Activated B cell treated with CpG ODN at 0.5 μM for 24 hours (primary cell): ENCODE measurements at regions of chr11 and their contacts with region 1.

Region 1: GRCh38 chr11:14331476-14332136 is 27.4 kb downstream of the RRAS2 start:
- DNase-seq: no peak
- ATAC-seq: peak; percentile 82
- H3K4me3 Mint-ChIP-seq: peak overlapping the region; percentile 63
- H3K27ac Mint-ChIP-seq: peak overlapping the region; percentile 87
- H3K4me1 Mint-ChIP-seq: peaks cover 81% of the 10 kb centered on the region
- H3K27me3 Mint-ChIP-seq: no peaks in the 10 kb centered on the region
- CTCF ChIP-seq: no peak

Region 2: DNA sequence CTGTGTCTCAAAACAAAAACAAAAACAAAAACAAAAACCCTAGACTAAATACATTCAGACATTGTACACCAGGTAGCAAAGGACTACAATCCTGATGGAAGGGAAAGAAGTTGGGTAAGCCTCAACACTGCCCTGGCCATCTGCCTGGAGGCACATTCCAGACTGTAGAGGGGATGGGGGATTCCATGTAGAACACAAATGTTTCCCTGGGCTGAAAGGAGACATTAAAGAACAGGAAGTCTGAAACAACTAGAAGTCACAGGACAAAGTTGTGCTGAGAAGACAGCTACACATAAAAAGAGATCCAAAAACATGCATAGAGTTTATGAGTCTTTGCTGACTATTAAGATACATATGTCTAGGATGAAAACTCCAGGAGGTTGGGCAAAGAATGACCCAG is 56.5 kb before region 1 on chr11:
- CTCF ChIA-PET with region 1: no interaction called
- POLR2A ChIA-PET with region 1: interaction called, 10 read pairs
- intact Hi-C with region 1: no loop called
- DNase-seq: no peak
- ATAC-seq: no peak
- H3K4me3 Mint-ChIP-seq: no peak overlapping the region
- H3K27ac Mint-ChIP-seq: peak overlapping the region; percentile 41
- H3K4me1 Mint-ChIP-seq: peaks cover 43% of the 10 kb centered on the region
- H3K27me3 Mint-ChIP-seq: no peaks in the 10 kb centered on the region
- CTCF ChIP-seq: no peak

Region 3: DNA sequence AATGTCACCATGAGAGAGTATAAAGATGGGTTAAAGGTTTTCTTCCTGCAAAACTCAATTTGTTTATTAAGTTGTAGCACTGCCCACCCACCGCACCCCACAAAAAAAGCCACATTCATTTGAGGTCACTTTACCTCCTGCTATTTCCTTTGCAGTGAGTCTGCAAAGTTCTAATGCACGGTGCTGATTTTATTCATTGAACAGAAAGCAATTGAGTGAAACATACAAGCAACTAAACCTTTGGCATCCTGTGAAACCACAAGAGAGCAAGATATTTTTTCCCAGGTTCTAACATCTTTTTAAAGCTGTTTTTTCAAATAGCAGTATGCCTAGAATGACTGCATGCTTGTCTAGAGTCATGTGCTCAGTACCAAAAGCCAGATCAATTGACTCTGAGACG is 11.6 kb before region 1 on chr11:
- CTCF ChIA-PET with region 1: interaction called, 3 read pairs
- POLR2A ChIA-PET with region 1: interaction called, 21 read pairs
- intact Hi-C with region 1: loop called (anchors 2 kb)
- DNase-seq: no peak
- ATAC-seq: no peak
- H3K4me3 Mint-ChIP-seq: peak overlapping the region; percentile 65
- H3K27ac Mint-ChIP-seq: peak overlapping the region; percentile 83
- H3K4me1 Mint-ChIP-seq: peaks cover 93% of the 10 kb centered on the region
- H3K27me3 Mint-ChIP-seq: no peaks in the 10 kb centered on the region
- CTCF ChIP-seq: no peak

Region 4: DNA sequence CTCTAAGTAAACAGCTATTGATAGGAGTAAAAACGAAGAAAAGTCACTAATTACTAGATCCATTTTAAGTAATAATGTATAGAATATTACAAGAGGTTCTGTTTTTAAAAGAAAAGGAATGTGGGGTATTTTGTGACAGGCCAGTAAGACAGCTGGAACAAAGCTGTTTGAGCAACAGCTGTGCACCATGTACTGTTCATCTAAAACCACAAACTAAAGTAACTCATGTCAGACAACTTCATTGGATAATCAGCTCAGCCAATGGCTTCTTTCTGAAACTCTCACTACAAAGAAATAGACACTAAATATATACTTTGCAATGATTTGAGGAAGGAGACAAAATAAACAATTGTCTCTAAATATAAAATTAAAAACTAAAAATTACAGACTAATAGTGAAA is 11.3 kb after region 1 on chr11:
- CTCF ChIA-PET with region 1: interaction called, 5 read pairs
- POLR2A ChIA-PET with region 1: interaction called, 7 read pairs
- intact Hi-C with region 1: loop called (anchors 1 kb)
- DNase-seq: no peak
- ATAC-seq: peak; percentile 32
- H3K4me3 Mint-ChIP-seq: no peak overlapping the region
- H3K27ac Mint-ChIP-seq: no peak overlapping the region
- H3K4me1 Mint-ChIP-seq: peaks cover 75% of the 10 kb centered on the region
- H3K27me3 Mint-ChIP-seq: no peaks in the 10 kb centered on the region
- CTCF ChIP-seq: no peak

Region 5: DNA sequence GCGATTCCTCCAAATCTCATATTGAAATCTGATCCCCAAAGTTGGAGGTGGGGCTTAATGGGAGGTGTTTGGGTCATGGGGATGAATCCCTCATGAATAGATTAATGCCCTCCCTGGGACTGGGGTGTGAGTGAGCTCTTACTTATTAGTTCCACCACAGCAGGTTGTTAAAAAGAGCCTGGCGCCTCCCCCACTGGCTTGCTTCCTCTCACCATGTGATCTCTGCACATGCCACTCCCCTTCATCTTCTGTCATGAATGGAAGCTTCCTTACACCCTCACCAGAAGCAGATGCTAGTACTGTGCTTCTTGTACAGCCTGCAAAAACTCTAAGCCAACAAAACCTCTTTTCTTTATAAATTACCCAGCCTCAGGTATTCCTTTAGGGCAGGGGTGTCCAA is 18.6 kb after region 1 on chr11:
- CTCF ChIA-PET with region 1: interaction called, 5 read pairs
- POLR2A ChIA-PET with region 1: interaction called, 3 read pairs
- intact Hi-C with region 1: loop called (anchors 2 kb)
- DNase-seq: no peak
- ATAC-seq: peak; percentile 71
- H3K4me3 Mint-ChIP-seq: no peak overlapping the region
- H3K27ac Mint-ChIP-seq: peak overlapping the region; percentile 25
- H3K4me1 Mint-ChIP-seq: peaks cover 70% of the 10 kb centered on the region
- H3K27me3 Mint-ChIP-seq: no peaks in the 10 kb centered on the region
- CTCF ChIP-seq: no peak